ENCODE measurements at regions of chr2 and their contacts with region 1.

Region 1: DNA sequence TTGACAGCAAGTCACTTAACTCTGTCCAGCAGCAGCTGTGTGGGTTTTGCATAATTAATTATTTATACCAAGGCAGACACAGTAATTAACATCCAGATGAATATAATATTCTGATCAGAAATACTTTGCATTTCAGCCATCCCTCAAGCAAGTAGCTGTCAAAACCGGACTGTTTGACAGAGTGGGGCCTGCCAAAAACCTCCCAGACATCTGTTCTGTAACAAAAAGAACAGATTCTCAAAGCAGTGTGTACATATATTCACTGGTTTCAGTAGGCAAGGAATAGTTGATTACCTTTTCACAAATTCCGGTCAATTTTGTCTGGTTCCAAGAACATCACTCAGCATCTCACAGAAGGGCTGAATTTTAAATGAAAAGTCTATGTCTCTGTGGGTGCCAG is 291.6 kb downstream of the CMPK2 start:
- DNase-seq: no peak
- ATAC-seq: no peak

Region 2: DNA sequence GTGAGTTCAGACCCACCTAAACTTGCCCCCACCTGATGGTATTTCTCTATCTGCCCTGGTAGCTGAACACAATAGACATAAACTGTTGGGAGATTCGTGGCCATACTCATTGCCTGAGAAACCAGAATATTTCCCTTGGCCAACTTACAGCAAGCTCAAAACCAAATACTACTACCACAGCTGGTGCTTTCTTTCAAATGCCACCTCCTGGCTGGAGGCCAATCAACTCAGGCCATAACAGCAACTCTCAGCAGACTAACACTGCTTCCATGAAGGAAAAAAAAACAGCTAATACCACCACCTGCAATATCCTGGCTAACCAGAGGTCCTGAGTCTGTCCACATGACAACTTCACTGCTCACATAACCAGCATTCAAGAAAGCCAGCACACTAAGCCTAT is 81.5 kb before region 1 on chr2:
- intact Hi-C with region 1: no loop called
- DNase-seq: no peak
- ATAC-seq: no peak

Region 3: DNA sequence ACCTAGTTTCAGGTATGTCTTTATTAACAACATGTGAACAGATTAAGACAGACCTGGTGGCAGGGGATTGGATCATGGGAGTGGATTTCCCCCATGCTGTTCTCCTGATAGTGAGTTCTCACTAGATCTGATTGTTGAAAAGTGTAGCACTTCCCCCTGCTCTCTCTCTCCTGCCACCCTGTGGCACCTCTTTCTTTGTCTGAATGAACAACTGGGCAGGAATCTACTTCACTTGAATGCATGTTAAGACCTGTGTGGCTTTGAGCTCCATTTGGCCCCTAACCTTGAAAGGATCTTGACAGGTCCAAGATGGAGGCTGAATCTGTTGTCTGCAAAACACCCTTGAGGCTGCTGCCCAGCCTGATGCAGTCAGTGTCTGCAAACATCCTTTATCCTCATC is 537.5 kb after region 1 on chr2:
- intact Hi-C with region 1: no loop called
- DNase-seq: no peak
- ATAC-seq: no peak

Region 4: GRCh38 chr2:7867867-7868266 is 1293.7 kb after region 1 on chr2:
- intact Hi-C with region 1: loop called (anchors 5 kb)
- DNase-seq: no peak
- ATAC-seq: no peak

Measured in sciatic nerve (tissue), 2 donors.